Spleen (tissue), 13 donors: ENCODE measurements at regions of chr17 and their contacts with region 1.

Region 1: DNA sequence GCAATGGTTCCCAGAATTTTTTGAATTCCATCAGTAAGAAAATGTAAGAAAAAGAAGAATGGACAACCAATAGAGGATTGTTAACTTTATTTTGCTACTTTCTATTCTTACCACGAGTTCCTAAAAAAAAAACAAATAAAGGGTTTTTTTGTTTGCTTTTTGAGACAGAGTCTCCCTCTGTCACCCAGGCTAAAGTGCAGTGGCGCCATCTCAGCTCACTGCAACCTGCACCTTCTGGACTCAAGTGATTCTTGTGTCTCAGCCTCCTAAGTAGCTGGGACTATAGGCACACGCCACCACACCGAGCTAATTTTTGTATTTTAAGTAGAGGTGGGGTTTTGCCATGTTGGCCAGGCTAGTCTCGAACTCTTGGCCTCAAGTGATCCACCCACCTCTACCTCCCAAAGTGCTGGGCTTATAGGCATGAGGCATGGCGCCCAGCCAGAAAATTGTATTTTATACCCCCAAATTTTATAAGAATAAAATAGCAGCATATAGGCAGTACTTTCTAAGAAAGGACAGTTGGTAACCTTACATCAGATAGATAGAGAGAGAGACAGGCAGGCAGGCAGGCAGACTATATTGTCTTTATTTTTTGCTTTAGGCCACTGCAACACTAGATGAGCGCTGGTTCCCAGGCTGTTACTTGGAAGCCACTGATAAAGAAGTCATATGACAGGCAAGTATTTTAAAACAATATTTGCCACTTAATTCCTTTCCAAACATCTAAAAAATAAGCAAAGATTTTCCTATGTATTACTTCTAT is 127.5 kb downstream of the VPS53 start:
- DNase-seq: no peak
- H3K4me3 ChIP-seq: no peak overlapping the region
- H3K27ac ChIP-seq: no peak overlapping the region
- H3K4me1 ChIP-seq: no peaks in the 10 kb centered on the region
- H3K27me3 ChIP-seq: no peaks in the 10 kb centered on the region
- CTCF ChIP-seq: no peak
- POLR2A ChIP-seq: no peak

Region 2: DNA sequence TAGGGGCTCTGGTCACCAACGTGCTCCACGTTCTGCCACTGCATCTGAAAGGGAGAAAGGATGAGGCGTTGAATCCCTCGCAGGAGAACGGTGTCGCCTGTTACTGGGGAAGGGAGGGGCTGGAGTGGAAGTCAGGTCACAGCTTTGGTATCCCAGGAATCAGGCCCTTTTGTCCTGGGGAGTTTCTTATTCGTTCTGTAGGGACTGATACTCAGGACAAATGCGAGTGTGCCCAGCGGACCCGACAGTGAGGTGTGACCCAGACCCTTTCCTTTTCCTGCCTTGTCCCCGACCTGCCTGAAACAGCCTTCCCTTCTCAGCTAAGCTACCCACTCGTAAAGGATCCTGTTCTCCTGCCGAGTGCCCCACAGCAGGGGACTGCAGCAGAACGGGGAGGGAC is 50.0 kb before region 1 on chr17:
- intact Hi-C with region 1: loop called (anchors 2 kb)
- DNase-seq: no peak
- H3K4me3 ChIP-seq: no peak overlapping the region
- H3K27ac ChIP-seq: peak overlapping the region in 1 of 8 donors; percentile 72
- H3K4me1 ChIP-seq: peaks cover 0 to 39% (median 4%) of the 10 kb centered on the region in 6 donors
- H3K27me3 ChIP-seq: no peaks in the 10 kb centered on the region
- CTCF ChIP-seq: no peak
- POLR2A ChIP-seq: no peak

Region 3: GRCh38 chr17:633641-634101 is 46.6 kb after region 1 on chr17:
- intact Hi-C with region 1: no loop called
- DNase-seq: no peak
- H3K4me3 ChIP-seq: no peak overlapping the region
- H3K27ac ChIP-seq: peak overlapping the region in 3 of 8 donors; percentile 23 to 39 (median 37)
- H3K4me1 ChIP-seq: peaks cover 0 to 17% (median 3%) of the 10 kb centered on the region in 6 donors
- H3K27me3 ChIP-seq: no peaks in the 10 kb centered on the region
- CTCF ChIP-seq: no peak
- POLR2A ChIP-seq: no peak